ENCODE measurements at regions of chr5 and their contacts with region 1.

Region 1: GRCh38 chr5:120564013-120564412 is 99.9 kb downstream of the PRR16 start:
- DNase-seq: no peak
- H3K4me3 ChIP-seq: no peak overlapping the region
- H3K27ac ChIP-seq: no peak overlapping the region
- H3K4me1 ChIP-seq: no peaks in the 10 kb centered on the region
- H3K27me3 ChIP-seq: no peaks in the 10 kb centered on the region
- CTCF ChIP-seq: no peak

Region 2: GRCh38 chr5:119840175-119840574 is 723.8 kb before region 1 on chr5:
- CTCF ChIA-PET with region 1: no interaction called
- POLR2A ChIA-PET with region 1: no interaction called
- intact Hi-C with region 1: no loop called
- DNase-seq: no peak
- H3K4me3 ChIP-seq: no peak overlapping the region
- H3K27ac ChIP-seq: no peak overlapping the region
- H3K4me1 ChIP-seq: no peaks in the 10 kb centered on the region
- H3K27me3 ChIP-seq: no peaks in the 10 kb centered on the region
- CTCF ChIP-seq: no peak

Region 3: DNA sequence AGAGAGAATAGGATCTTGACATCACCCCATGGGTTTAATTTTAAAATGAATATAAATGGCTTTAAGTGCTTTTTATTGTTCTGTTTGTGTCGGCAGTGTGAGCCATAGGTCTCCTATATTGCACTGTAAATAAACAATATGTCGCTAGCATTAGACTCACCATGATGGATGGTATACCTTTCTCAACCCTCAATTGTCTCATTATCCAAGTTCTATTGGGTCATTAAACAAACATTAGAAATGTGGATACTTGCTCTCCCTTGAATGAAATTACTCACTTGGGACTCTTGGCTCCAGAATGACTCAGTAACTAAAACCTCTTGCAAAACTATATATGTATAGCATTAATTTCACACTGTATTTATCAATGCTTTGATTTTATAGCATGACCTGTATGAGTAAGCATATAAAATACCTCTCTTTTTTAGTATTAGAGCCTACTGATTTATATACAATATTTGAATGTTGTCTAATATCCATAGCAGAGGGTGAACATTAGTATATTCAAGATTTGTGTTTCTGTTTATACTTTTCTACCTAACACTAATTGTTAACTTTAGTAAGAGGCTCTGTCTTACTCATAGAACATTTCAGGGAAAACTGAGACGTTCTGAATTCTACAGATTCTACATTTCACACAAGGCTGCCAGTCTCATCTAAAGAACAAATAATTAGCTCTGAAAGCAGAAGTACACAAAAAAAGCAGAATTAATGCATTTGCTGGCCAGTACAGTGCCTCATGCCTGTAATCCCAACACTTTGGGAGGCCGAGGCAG is 403.7 kb before region 1 on chr5:
- CTCF ChIA-PET with region 1: no interaction called
- POLR2A ChIA-PET with region 1: no interaction called
- intact Hi-C with region 1: no loop called
- DNase-seq: peak in 1 of 2 experiments; percentile 45
- H3K4me3 ChIP-seq: no peak overlapping the region
- H3K27ac ChIP-seq: peak overlapping the region; percentile 21; the same call in 1 of the 2 replicates
- H3K4me1 ChIP-seq: 0 out of 2 replicates have a peak, but pooled peaks cover 8% of the 10 kb centered on the region
- H3K27me3 ChIP-seq: no peaks in the 10 kb centered on the region
- CTCF ChIP-seq: no peak

Region 4: DNA sequence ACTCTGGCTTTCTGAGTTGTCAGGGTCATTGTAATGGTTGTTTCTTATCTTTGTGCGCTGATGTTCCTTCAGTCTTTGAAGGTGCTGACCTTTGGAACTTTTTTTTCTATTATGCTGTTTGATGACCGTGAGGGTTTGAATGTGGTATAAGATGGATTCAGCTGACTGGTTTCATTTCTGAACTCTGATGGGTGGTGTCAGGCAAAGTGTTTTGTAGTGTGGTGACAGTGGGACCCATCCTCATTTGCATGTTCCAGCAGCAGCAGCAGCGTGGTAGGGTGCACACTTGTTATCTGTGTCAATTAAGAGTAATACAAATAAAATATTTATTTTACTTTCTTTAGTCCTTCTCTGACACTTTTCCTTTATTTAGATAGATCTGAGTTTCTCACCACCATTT is 327.7 kb before region 1 on chr5:
- CTCF ChIA-PET with region 1: no interaction called
- POLR2A ChIA-PET with region 1: no interaction called
- intact Hi-C with region 1: no loop called
- DNase-seq: no peak
- H3K4me3 ChIP-seq: no peak overlapping the region
- H3K27ac ChIP-seq: no peak overlapping the region
- H3K4me1 ChIP-seq: 0 out of 2 replicates have a peak, but pooled peaks cover 11% of the 10 kb centered on the region
- H3K27me3 ChIP-seq: no peaks in the 10 kb centered on the region
- CTCF ChIP-seq: no peak

Region 5: GRCh38 chr5:120655828-120656435 is 91.9 kb after region 1 on chr5:
- CTCF ChIA-PET with region 1: interaction called, 14 read pairs
- POLR2A ChIA-PET with region 1: no interaction called
- intact Hi-C with region 1: no loop called
- DNase-seq: no peak
- H3K4me3 ChIP-seq: no peak overlapping the region
- H3K27ac ChIP-seq: no peak overlapping the region
- H3K4me1 ChIP-seq: no peaks in the 10 kb centered on the region
- H3K27me3 ChIP-seq: no peaks in the 10 kb centered on the region
- CTCF ChIP-seq: peak; percentile 75

Region 6: GRCh38 chr5:120886351-120886860 is 322.4 kb after region 1 on chr5:
- CTCF ChIA-PET with region 1: no interaction called
- POLR2A ChIA-PET with region 1: no interaction called
- intact Hi-C with region 1: no loop called
- DNase-seq: no peak
- H3K4me3 ChIP-seq: no peak overlapping the region
- H3K27ac ChIP-seq: no peak overlapping the region
- H3K4me1 ChIP-seq: no peaks in the 10 kb centered on the region
- H3K27me3 ChIP-seq: no peaks in the 10 kb centered on the region
- CTCF ChIP-seq: no peak

Measured in PC-9 (cell line).